A549 (cell line): ENCODE measurements at regions of chr2 and their contacts with region 1.

Region 1: GRCh38 chr2:10302479-10303180 is at the start of gene HPCAL1:
- DNase-seq: peak; percentile 92 to 93
- ATAC-seq: peak; percentile 79 to 91
- H3K4me3 ChIP-seq: peak within 1 kb of the TSS; percentile 84
- H3K27ac ChIP-seq: peak within 1 kb of the TSS; percentile 95 to 98
- H3K4me1 ChIP-seq: peaks cover 62% of the 10 kb centered on the region
- CTCF ChIP-seq: peak; percentile 68
- EP300 ChIP-seq: no peak
- POLR2A ChIP-seq: peak; percentile 91
- RAD21 ChIP-seq: peak; percentile 36 to 78; a peak in 4 of 5 replicates
- polyA plus RNA-seq, gene HPCAL1: 37.8 and 44.4 TPM in 2 replicates

Region 2: DNA sequence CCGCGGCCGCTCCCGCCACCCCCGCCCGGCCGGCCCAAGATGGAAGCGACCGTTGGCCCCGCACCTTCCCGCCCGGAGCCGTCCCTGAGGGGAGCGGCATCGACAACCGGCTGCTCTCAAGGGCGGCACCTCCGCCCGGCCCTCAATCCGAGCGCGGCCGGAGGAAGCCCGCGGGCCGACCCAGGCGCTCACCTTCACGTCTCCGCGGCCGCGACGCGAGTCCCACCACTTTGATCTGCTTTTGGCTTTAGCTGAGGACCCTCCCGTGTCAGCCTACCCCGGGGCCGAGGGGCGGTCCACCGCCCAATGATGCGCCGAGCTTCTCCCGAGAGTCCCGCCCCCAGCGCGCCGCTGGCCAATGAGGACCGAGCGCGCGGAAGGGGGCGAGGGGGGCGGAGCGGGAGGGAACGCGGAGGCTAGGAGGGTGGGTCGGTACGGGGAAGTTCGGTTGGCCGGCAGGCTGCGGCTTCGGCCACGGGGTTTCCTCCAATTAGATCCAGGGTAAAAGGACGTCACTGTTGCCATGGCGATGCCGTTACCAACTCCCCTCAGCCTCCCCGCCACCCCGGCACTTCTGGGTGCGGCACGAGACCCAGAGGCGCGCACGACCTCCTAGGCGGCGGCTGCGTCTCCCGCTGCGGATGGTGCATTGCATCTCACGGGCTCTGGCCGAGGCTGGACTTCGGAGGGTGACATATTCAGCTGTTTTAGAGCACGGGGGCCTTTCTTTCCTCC is 671.7 kb before region 1 on chr2 and contains the start of gene YWHAQ:
- CTCF ChIA-PET with region 1: no interaction called
- POLR2A ChIA-PET with region 1: no interaction called
- DNase-seq: peak; percentile 99
- ATAC-seq: peak; percentile 88 to 94
- H3K4me3 ChIP-seq: peak within 1 kb of the TSS; percentile 93
- H3K27ac ChIP-seq: peak within 1 kb of the TSS; percentile 96 to 97
- H3K4me1 ChIP-seq: peaks cover 40% of the 10 kb centered on the region
- CTCF ChIP-seq: no peak
- EP300 ChIP-seq: no peak
- POLR2A ChIP-seq: peak; percentile 98
- RAD21 ChIP-seq: peak; percentile 22 to 40; a peak in 3 of 5 replicates
- polyA plus RNA-seq, gene YWHAQ: 672 and 833 TPM in 2 replicates

Region 3: DNA sequence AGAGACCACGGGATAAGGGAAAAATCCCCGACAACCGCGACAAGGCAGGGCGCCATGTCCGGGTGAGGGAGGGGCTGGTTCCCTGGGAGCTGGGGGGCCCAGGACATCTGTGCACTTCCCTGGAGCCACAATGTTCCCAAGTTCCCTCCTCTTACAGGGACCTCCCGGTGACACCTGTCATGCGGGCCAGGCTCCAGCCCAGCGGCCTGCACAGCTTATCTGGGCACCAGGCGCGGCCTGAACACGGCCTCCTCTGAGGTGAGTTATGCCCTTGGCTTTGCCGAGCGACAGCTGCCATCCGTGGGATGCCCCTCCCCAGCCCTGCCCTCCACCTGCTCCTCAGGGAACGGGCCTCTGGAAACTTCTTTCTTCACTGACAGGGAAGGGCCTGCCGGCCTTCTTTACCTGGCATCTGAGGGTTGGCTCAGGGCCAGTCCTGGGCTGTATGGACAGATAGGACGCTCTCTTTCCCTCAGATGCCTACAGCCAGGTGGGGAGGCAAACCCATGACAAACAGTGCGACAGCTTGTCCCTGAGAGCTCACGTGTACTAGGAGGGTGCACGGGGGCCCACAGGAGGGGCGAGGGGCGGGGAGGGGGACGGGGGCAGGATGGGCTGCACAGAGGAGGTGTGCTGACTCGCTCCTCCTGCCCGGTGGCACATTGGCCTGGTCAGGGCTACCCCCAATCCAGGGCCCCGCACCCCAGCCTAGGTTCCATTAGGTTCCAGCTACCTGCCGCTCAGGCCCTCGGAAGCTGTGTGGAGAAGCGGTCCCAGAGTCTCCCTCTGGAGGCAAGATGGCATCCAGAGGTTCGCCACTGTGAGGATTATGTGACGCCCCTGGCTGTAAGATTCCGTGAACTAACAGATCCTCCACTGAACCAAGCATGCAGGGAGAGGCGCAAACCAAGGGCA is 34.8 kb before region 1 on chr2:
- CTCF ChIA-PET with region 1: interaction called, 10 read pairs
- POLR2A ChIA-PET with region 1: no interaction called
- DNase-seq: no peak
- ATAC-seq: no peak
- H3K4me3 ChIP-seq: no peak overlapping the region
- H3K27ac ChIP-seq: no peak overlapping the region; a peak in 1 of 6 replicates
- H3K4me1 ChIP-seq: peaks cover 22% of the 10 kb centered on the region
- CTCF ChIP-seq: no peak
- EP300 ChIP-seq: no peak
- POLR2A ChIP-seq: no peak
- RAD21 ChIP-seq: no peak

Region 4: GRCh38 chr2:10285556-10286198 is 17.0 kb before region 1 on chr2:
- CTCF ChIA-PET with region 1: interaction called, 52 read pairs
- POLR2A ChIA-PET with region 1: interaction called, 5 read pairs
- DNase-seq: peak; percentile 86 to 90
- ATAC-seq: peak; percentile 54 to 76
- H3K4me3 ChIP-seq: no peak overlapping the region
- H3K27ac ChIP-seq: peak overlapping the region; percentile 87
- H3K4me1 ChIP-seq: peaks cover 67% of the 10 kb centered on the region
- CTCF ChIP-seq: no peak
- EP300 ChIP-seq: no peak
- POLR2A ChIP-seq: peak; percentile 35; the same call in 1 of the 2 replicates
- RAD21 ChIP-seq: peak in 1 of 2 experiments; percentile 33; a peak in 2 of 5 replicates

Region 5: GRCh38 chr2:10331027-10331701 is 28.5 kb after region 1 on chr2:
- CTCF ChIA-PET with region 1: interaction called, 39 read pairs
- POLR2A ChIA-PET with region 1: no interaction called
- DNase-seq: peak; percentile 36 to 81
- ATAC-seq: peak; percentile 58 to 78
- H3K4me3 ChIP-seq: peak overlapping the region; percentile 25; the same call in 2 of the 3 replicates
- H3K27ac ChIP-seq: peak overlapping the region; percentile 89 to 92
- H3K4me1 ChIP-seq: peaks cover 84% of the 10 kb centered on the region
- CTCF ChIP-seq: no peak
- EP300 ChIP-seq: no peak
- POLR2A ChIP-seq: no peak
- RAD21 ChIP-seq: peak in 1 of 2 experiments; percentile 36; a peak in 3 of 5 replicates